OCI-LY7 (cell line): ENCODE measurements at regions of chr14 and their contacts with region 1.

Region 1: DNA sequence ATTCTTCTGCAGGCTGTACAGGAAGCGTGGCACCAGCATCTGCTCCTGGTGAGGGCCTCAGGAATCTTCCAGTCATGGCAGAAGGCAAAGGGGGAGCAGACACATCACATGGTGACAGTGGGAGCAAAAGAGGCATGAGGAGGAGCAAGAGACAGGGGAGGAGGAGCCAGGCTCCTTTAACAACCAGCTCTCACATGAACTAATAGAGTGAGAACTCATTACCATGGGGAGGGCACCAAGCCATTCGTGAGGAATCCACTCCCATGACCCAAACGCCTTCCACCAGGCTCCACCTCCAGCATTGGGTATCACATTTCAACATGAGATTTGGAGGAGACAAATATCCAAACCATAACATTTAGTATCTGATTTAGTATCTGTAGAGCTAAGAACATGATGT is 14.7 kb upstream of the TRIM9 start:
- DNase-seq: no peak
- H3K4me3 ChIP-seq: no peak overlapping the region
- H3K27ac ChIP-seq: no peak overlapping the region
- H3K4me1 ChIP-seq: no peaks in the 10 kb centered on the region
- CTCF ChIP-seq: no peak

Region 2: DNA sequence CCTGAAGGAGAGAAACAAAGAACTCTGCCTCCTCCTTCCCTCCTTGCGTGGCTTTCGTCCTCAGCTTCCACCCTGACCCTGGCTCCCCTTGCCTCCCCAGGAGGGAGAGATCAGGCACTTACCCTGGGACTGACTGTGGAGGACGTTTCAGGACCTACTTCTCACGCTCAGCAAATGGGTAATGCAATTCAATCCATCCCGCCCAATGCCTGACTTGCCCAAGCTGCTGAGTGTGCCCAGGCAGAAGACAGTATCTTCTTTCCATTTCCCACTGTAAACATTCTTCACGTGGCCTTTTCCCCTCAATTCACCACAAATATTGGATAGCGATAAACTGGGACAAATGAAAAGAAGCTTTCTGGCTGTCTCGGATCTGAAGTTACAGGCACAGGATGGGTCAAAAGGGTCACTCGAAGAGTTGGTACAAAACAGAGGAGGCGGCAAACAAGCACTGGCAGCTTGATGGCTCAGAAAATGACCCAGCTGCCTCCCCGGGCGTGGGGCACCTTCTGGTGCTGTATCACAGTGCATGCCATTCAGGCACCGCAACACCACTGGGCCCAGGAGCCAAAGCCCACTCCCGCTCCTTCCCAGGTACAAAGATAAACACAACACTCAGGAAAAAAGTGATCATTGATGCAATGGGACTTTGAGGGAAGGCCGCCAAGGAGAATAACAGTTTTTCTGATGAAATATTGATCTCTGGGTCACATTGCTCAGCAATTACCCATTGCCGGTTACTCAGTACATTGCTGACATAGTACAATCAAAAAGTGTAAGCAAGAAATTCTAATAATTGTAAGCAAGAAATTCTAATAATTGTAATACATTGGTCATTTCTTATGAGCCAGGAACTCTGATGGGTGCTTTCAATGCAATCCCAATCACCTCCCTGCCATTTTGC is 80.5 kb before region 1 on chr14:
- CTCF ChIA-PET with region 1: no interaction called
- POLR2A ChIA-PET with region 1: no interaction called
- intact Hi-C with region 1: no loop called
- DNase-seq: no peak
- H3K4me3 ChIP-seq: no peak overlapping the region
- H3K27ac ChIP-seq: no peak overlapping the region
- H3K4me1 ChIP-seq: no peaks in the 10 kb centered on the region
- CTCF ChIP-seq: no peak

Region 3: DNA sequence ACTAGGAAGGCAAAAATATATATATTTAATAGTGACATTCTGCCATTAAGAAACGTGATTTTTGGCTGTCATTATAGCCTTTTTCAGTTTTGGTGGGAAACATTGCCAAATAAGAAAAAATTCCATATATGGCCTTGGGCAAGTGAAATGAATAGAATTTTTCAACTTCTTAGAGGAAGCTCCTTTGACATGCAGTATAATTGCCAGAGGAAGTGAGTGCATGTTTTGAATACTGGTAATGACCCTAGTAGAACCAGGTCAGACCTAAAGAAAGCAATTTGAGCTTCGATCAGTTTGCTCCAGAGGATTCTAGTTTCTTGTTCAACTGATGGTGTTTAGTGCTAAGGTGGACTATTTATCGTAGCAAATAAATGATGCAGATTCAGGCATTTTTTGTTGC is 11.4 kb after region 1 on chr14:
- CTCF ChIA-PET with region 1: no interaction called
- POLR2A ChIA-PET with region 1: interaction called, 18 read pairs
- intact Hi-C with region 1: no loop called
- DNase-seq: no peak
- H3K4me3 ChIP-seq: no peak overlapping the region
- H3K27ac ChIP-seq: no peak overlapping the region
- H3K4me1 ChIP-seq: no peaks in the 10 kb centered on the region
- CTCF ChIP-seq: no peak